AG04449 (cell line): ENCODE measurements at regions of chr17 and their contacts with region 1.

Region 1: DNA sequence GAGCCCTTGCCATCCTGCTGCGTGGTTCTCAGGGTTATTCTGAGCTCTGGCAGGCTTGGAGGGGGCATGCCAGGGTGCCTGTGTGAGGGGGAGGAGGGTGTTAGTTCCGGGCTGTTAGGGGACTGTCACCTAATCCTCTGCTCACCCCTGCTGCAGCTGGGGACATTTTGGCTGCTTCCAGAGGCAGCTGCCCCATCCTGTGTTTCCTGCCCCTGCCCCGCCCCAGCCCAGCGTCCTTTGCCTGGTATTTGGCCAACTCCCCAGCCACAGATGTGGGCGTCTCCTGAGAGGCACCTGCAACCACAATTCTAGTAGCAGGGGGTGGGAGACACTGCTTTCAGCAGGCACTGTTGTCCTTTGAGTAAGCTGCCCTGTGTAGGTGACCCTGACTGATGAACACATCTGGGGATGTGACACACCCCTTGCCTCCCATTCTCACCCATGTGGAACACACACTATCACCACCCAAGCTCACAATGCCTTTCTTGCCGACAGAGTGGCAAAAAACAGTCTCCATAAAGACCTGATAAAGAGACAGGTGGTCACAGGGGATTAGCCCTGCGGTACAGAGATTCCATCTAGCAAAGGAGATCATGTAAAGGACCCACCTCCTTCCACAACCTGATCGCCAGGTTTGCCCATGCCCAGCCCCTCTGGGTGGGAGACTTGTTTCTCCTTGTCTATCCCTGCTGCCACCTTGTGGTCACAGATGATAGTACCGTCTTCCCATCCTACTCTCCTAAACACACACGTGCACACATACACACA is at the start of gene CHRNE:
- DNase-seq: no peak
- H3K4me3 ChIP-seq: no peak within 1 kb of the TSS
- CTCF ChIP-seq: peak; percentile 79

Region 2: DNA sequence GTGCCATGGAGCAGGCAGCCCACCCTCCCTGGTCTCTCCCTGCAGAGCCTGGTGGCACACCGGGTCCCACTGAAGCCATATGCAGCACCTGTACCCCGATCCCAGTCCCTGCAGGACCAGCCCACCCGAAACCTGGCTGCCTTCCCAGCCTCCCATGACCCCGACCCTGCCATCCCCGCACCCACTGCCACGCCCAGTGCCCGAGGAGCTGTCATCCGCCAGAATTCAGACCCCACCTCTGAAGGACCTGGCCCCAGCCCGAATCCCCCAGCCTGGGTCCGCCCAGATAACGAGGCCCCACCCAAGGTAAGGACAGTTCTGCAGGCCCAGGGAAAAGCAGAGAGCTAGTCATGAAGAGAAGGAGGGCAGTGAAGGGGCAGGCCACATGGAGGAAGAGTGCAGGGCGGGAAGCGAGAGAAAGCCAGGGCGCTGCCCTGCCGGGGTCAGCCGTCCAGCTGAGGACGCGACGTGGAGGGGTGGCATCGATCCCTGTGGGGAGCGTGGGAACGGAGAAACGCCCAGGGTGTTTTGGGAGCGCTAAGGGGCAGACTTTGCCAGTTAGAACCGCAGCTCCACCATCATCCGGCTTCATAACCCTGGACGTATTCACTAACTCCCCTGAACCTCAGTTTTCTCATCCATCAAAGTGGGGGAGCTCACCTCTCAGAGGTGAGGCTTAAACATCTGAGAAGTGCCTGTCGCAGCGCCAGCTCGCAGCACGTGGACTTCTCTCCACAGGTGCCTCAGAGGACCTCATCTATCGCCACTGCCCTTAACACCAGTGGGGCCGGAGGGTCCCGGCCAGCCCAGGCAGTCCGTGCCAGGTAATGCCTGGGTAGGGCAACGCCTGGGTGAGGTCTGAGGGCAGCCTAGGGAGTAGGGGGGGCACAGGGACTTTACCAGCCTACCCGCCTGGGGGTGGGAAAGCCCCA is 11.6 kb before region 1 on chr17:
- CTCF ChIA-PET with region 1: interaction called, 72 read pairs
- POLR2A ChIA-PET with region 1: no interaction called
- DNase-seq: no peak
- H3K4me3 ChIP-seq: no peak overlapping the region
- CTCF ChIP-seq: no peak

Region 3: DNA sequence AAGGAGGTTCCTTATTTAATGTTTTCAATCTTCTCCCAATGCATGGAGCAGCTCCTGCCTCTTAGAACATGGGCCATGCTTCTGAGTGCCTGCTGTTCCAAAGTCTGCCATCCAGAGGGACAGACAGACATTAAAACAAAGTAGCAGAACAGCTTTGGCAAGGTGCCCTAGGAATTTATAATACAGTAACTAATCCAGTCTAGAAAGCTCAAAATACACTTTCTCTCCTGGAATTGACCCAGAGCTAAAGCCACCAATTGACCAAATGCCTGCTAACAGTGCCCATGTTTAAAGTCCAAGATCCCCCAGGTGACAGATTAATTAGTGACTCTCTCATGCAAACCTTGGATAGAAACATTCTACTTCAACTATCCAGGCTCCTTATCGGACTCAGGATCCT is 10.8 kb after region 1 on chr17:
- CTCF ChIA-PET with region 1: interaction called, 31 read pairs
- POLR2A ChIA-PET with region 1: no interaction called
- DNase-seq: no peak
- H3K4me3 ChIP-seq: no peak overlapping the region
- CTCF ChIP-seq: no peak

Region 4: DNA sequence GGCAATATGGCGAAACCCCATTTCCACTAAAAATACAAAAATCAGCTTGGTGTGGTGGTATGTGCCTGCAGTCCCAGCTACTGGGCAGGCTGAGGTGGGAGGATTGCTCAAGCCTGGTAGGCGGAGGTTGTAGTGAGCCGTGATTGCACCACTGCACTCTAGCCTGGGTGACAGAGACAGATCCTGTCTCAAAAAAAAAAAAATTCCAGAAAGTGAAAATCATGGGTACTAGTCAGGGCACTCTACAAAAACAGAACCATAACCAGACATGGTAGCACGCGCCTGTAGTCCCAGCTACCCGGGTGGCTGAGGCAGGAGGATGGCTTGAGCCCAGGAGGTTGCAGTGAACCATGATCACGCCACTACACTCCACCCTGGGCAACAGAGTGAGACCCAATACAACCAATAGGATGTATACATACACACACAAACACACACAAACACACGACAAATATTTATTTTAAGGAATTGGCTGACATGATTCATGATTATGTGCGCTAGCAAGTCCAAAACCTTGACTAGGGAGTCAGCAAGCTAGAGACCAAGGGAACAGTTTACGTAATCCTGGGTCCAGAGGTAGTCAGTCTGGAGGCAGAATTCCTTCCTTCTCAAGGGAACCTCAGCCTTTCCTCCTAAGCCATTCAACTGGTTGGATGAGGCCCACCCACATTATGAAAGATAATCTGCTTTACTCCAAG is 17.3 kb after region 1 on chr17:
- CTCF ChIA-PET with region 1: interaction called, 21 read pairs
- POLR2A ChIA-PET with region 1: no interaction called
- DNase-seq: no peak
- H3K4me3 ChIP-seq: no peak overlapping the region
- CTCF ChIP-seq: no peak

Region 5: GRCh38 chr17:5065227-5065744 is 162.1 kb after region 1 on chr17:
- CTCF ChIA-PET with region 1: interaction called, 93 read pairs
- POLR2A ChIA-PET with region 1: no interaction called
- DNase-seq: no peak
- H3K4me3 ChIP-seq: no peak overlapping the region
- CTCF ChIP-seq: no peak